ENCODE measurements at regions of chr4 and their contacts with region 1.

Region 1: DNA sequence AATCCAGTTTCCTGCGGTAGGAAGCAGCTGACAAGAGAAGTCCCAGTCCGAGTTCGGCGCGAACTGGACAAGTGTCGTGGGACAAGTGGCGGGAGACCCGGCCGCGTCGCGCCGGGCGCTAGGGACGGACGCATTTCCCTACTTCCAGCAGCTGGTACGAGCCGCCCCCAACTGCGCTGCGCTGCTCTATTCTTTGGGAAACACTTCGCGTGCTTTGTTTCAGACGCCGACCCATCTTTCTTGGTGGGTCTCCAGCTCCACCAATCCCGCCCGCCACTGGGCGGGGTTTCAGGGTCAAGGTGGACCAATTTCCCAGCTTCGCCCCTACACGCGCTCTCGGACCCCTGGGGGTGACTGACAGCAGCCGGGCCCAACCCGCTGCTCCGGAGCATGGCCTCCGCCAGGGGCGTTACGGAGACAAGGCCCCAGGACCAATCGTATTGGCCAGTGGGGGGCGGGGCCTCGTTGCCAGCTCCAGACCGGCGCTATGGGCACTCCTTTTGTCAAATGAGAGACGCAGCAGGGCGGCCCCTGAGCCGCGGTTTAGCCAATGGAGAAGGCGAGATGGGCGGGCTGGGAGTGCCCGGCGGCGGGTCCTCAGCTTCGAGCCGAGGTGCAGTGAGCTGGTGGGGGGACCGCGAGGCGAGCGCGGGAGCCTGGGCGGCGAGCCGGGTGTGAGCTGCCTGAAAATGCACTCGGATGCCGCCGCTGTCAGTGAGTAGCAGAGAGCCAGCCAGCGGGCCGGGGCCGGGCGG is at the start of gene DCUN1D4:
- DNase-seq: peak; percentile 99 to 100 (median 100)
- H3K4me3 ChIP-seq: peak within 1 kb of the TSS; percentile 64 to 99 (median 85)
- H3K27ac ChIP-seq: peak within 1 kb of the TSS; percentile 28 to 97 (median 93)
- H3K27me3 ChIP-seq: no peaks in the 10 kb centered on the region
- CTCF ChIP-seq: peak in 55 of 56 donors; percentile 21 to 78 (median 62)
- total RNA-seq, gene DCUN1D4: 64.1 to 133 (median 104) TPM

Region 2: GRCh38 chr4:52038103-52038912 is 195.6 kb after region 1 on chr4 and contains the start of gene SGCB:
- intact Hi-C with region 1: loop called (anchors 5 kb)
- DNase-seq: peak; percentile 65 to 92 (median 76)
- H3K4me3 ChIP-seq: peak within 1 kb of the TSS; percentile 57 to 95 (median 83)
- H3K27ac ChIP-seq: peak within 1 kb of the TSS in 58 of 59 donors; percentile 23 to 95 (median 85)
- H3K27me3 ChIP-seq: no peaks in the 10 kb centered on the region
- CTCF ChIP-seq: peak in 4 of 56 donors; percentile 15 to 22 (median 19)
- total RNA-seq, gene SGCB: 44.2 to 91.0 (median 64.4) TPM